ENCODE measurements at regions of chr10 and their contacts with region 1.

Region 1: GRCh38 chr10:27457966-27458365 is 46.1 kb upstream of the RAB18 start:
- DNase-seq: peak in 2 of 3 donors; percentile 57 to 59
- H3K4me3 ChIP-seq: no peak overlapping the region
- H3K27ac ChIP-seq: no peak overlapping the region
- H3K4me1 ChIP-seq: peaks cover 3 to 26% (median 7%) of the 10 kb centered on the region in 4 experiments
- H3K27me3 ChIP-seq: no peaks in the 10 kb centered on the region

Region 2: GRCh38 chr10:27241652-27242472 is 216.1 kb before region 1 on chr10:
- CTCF ChIA-PET with region 1: no interaction called
- POLR2A ChIA-PET with region 1: no interaction called
- DNase-seq: peak; percentile 94 to 97 (median 97)
- H3K4me3 ChIP-seq: peak overlapping the region; percentile 74 to 93 (median 88)
- H3K27ac ChIP-seq: peak overlapping the region; percentile 90 to 95
- H3K4me1 ChIP-seq: peaks cover 3 to 34% (median 29%) of the 10 kb centered on the region in 4 experiments
- H3K27me3 ChIP-seq: no peaks in the 10 kb centered on the region

Region 3: DNA sequence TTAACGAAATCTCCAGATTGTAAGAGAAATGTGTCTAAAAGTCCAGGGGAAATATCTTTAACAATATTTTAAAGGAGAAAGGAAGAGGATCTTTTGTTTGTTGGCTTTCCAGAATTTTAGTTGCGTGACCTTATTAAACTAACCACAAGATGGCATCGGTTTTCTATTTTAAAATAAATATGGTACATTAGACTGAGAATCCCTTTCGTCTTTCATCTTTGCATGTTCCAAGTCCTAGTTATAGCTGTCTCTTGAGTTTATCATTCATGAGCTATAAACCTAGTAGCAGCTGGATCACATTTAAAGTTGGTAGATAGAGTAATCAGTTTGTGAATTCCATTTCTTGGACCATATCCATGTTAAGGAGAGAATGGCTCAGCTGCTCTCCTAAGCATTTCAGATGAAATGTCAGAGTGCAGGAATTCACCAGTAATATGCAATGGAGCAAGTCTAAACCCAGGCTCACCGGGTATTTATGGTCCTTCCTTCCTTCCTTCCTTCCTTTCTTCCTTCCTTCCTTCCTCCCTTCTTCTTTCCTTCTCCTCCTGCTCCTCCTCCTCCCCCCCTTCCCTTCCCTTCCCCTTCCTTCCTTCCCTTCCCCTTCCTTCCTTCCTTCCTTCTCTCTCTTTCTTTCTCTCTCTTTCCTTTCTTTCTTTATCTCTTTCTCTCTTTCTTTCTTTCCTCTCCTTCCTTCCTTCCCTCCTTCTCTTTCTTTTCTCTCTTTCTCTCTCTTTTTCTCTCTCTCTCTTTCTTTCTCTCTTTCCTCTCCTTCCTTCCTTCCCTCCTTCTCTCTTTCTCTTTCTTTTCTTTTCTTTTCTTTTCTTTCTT is 11.7 kb before region 1 on chr10:
- CTCF ChIA-PET with region 1: interaction called, 14 read pairs
- POLR2A ChIA-PET with region 1: no interaction called
- DNase-seq: peak; percentile 41 to 59 (median 58)
- H3K4me3 ChIP-seq: peak overlapping the region in 1 of 7 experiments; percentile 4
- H3K27ac ChIP-seq: no peak overlapping the region
- H3K4me1 ChIP-seq: peaks cover 3 to 29% (median 9%) of the 10 kb centered on the region in 4 experiments
- H3K27me3 ChIP-seq: no peaks in the 10 kb centered on the region